ENCODE measurements at regions of chr7 and their contacts with region 1.

Region 1: GRCh38 chr7:51366930-51367613 is 50.5 kb upstream of the COBL start:
- DNase-seq: peak; percentile 51 to 63
- H3K4me3 ChIP-seq: no peak overlapping the region
- H3K27ac ChIP-seq: no peak overlapping the region
- H3K4me1 ChIP-seq: peaks cover 7 to 15% (median 10%) of the 10 kb centered on the region in 4 experiments
- H3K27me3 ChIP-seq: no peaks in the 10 kb centered on the region
- CTCF ChIP-seq: peak; percentile 76 to 95 (median 89)
- EP300 ChIP-seq: no peak
- POLR2A ChIP-seq: no peak
- RAD21 ChIP-seq: peak; percentile 93 to 97

Region 2: GRCh38 chr7:51175316-51175991 is 191.6 kb before region 1 on chr7:
- CTCF ChIA-PET with region 1: interaction called, 352 read pairs
- POLR2A ChIA-PET with region 1: interaction called, 3 read pairs
- DNase-seq: no peak
- H3K4me3 ChIP-seq: peak overlapping the region in 1 of 4 experiments; percentile 27; a peak in 2 of 8 replicates
- H3K27ac ChIP-seq: peak overlapping the region; percentile 16; the same call in 1 of the 2 replicates
- H3K4me1 ChIP-seq: peaks cover 6 to 17% (median 11%) of the 10 kb centered on the region in 4 experiments; a peak in 5 of 7 replicates
- H3K27me3 ChIP-seq: no peaks in the 10 kb centered on the region
- CTCF ChIP-seq: no peak
- EP300 ChIP-seq: 0 out of 3 replicates have a peak, but pooled peaks of 1 of the 2 experiments have one; percentile 24
- POLR2A ChIP-seq: no peak
- RAD21 ChIP-seq: no peak

Region 3: GRCh38 chr7:51275532-51275931 is 91.5 kb before region 1 on chr7:
- CTCF ChIA-PET with region 1: interaction called, 16 read pairs
- POLR2A ChIA-PET with region 1: no interaction called
- DNase-seq: peak in 1 of 2 experiments; percentile 45
- H3K4me3 ChIP-seq: no peak overlapping the region
- H3K27ac ChIP-seq: no peak overlapping the region
- H3K4me1 ChIP-seq: peaks cover 0 to 6% (median 4%) of the 10 kb centered on the region in 4 experiments; a peak in 5 of 7 replicates
- H3K27me3 ChIP-seq: no peaks in the 10 kb centered on the region
- CTCF ChIP-seq: no peak
- EP300 ChIP-seq: no peak
- POLR2A ChIP-seq: no peak
- RAD21 ChIP-seq: no peak

Region 4: GRCh38 chr7:51308265-51308664 is 58.8 kb before region 1 on chr7:
- CTCF ChIA-PET with region 1: interaction called, 92 read pairs
- POLR2A ChIA-PET with region 1: no interaction called
- DNase-seq: no peak
- H3K4me3 ChIP-seq: no peak overlapping the region
- H3K27ac ChIP-seq: no peak overlapping the region
- H3K4me1 ChIP-seq: peaks cover 4 to 15% (median 10%) of the 10 kb centered on the region in 4 experiments; a peak in 6 of 7 replicates
- H3K27me3 ChIP-seq: no peaks in the 10 kb centered on the region
- CTCF ChIP-seq: no peak
- EP300 ChIP-seq: no peak
- POLR2A ChIP-seq: no peak
- RAD21 ChIP-seq: no peak

Region 5: GRCh38 chr7:51335057-51335456 is 32.0 kb before region 1 on chr7:
- CTCF ChIA-PET with region 1: interaction called, 18 read pairs
- POLR2A ChIA-PET with region 1: no interaction called
- DNase-seq: peak in 1 of 2 experiments; percentile 37
- H3K4me3 ChIP-seq: no peak overlapping the region
- H3K27ac ChIP-seq: no peak overlapping the region
- H3K4me1 ChIP-seq: no peaks in the 10 kb centered on the region
- H3K27me3 ChIP-seq: no peaks in the 10 kb centered on the region
- CTCF ChIP-seq: no peak
- EP300 ChIP-seq: no peak
- POLR2A ChIP-seq: no peak
- RAD21 ChIP-seq: no peak

Region 6: DNA sequence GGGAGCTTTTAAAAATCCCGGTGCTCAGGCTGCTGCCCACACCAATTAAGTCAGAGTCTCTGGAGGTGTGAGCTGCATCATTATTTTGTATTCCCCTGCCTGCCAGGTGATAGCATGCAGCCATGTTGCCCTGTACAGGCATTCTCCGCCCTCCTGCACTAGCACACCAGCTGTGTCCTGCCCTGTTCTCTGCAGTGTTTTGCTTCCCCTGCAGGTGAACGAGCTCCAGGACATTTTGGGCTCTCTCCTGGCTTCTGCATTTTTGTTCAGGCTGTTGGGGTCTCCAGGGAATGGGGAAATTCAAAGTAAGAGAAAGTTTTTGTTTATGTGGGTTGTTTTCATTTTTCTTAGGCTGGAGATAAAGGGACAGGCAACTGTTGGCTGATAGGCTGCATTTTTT is 220.5 kb after region 1 on chr7:
- CTCF ChIA-PET with region 1: no interaction called
- POLR2A ChIA-PET with region 1: no interaction called
- DNase-seq: no peak
- H3K4me3 ChIP-seq: no peak overlapping the region
- H3K27ac ChIP-seq: no peak overlapping the region
- H3K4me1 ChIP-seq: no peaks in the 10 kb centered on the region
- H3K27me3 ChIP-seq: peaks cover 0 to 2% (median 0%) of the 10 kb centered on the region in 4 experiments; a peak in 2 of 7 replicates
- CTCF ChIP-seq: peak; percentile 37 to 46 (median 43); a peak in 3 of 4 replicates
- EP300 ChIP-seq: no peak
- POLR2A ChIP-seq: no peak
- RAD21 ChIP-seq: peak; percentile 46 to 67

Region 7: DNA sequence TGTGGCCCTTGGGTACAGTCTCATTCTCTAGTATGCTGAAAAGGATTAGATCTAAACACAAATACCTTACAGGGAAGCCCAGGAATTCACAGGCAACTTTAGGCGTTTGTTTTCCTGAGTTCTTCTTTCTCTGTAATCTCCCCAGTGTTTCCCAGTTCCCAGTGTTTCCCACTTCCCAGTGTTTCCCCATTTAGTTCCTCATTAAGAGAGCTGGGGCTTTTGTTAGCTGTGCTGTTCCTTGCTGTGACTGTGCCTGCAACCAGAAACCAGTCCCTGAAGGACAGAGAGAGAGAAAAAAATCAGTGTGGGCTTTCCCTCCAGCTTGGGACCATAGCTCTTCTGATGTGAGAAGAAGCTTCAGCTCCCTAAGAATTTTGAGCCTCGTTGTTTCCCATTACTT is 752.5 kb after region 1 on chr7:
- CTCF ChIA-PET with region 1: no interaction called
- POLR2A ChIA-PET with region 1: no interaction called
- DNase-seq: no peak
- H3K4me3 ChIP-seq: peak overlapping the region in 1 of 4 experiments; percentile 38; a peak in 2 of 8 replicates
- H3K27ac ChIP-seq: peak overlapping the region; percentile 24; the same call in 1 of the 2 replicates
- H3K4me1 ChIP-seq: peaks cover 5 to 26% (median 21%) of the 10 kb centered on the region in 4 experiments
- H3K27me3 ChIP-seq: no peaks in the 10 kb centered on the region
- CTCF ChIP-seq: no peak
- EP300 ChIP-seq: no peak
- POLR2A ChIP-seq: no peak
- RAD21 ChIP-seq: no peak

Measured in H1 (cell line).